Activated CD4-positive, alpha-beta T cell treated with anti-CD3 and anti-CD28 coated beads, Interleukin-2, amount 10 ng/mL, durations not matched to agents 24 days and 14 days (primary cell): ENCODE measurements at regions of chr9 and their contacts with region 1.

Region 1: DNA sequence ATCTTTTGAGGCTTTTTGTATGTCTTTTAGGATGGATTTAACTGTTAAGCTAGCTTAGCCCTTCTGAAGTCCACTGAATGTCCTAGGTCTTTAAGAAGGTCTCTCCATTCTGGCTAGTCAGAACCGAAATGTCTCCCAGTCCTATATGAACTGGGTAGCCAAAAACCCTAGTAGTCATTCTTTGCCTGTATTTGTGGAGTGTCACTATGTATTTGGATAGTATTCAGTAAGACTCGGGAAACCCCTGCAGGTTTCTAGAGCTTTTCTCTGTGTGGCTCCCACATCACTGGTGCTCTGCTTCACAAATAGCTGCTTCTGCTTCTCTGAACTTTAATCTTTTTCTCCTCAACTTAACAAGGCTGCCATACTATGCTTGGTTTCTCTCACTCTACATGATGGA is 68.0 kb downstream of the RIC1 start:
- DNase-seq: no peak
- H3K4me3 Mint-ChIP-seq: no peak overlapping the region
- H3K27ac Mint-ChIP-seq: peak overlapping the region; percentile 5
- H3K4me1 Mint-ChIP-seq: peaks cover 9% of the 10 kb centered on the region
- H3K27me3 Mint-ChIP-seq: no peaks in the 10 kb centered on the region

Region 2: DNA sequence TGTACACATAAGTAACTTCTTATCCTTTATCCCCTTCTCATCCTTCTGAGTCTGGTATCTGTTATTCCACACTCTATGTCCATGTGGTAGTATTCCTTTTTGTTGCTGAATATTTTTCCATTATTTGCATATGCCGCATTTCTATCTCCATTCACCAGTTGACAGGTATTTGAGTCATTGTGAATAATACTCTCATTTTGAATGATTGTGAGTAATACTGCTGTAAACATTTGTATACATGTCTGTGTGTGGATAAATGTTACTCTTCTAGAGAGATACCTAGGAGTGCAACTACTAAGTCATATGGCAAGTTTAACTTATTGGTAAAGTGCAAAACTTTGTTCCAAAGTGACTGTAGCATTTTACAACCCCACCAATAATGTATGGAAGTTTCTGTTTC is 52.4 kb before region 1 on chr9:
- intact Hi-C with region 1: loop called (anchors 10 kb)
- DNase-seq: no peak
- H3K4me3 Mint-ChIP-seq: no peak overlapping the region
- H3K27ac Mint-ChIP-seq: peak overlapping the region; percentile 52
- H3K4me1 Mint-ChIP-seq: peaks cover 16% of the 10 kb centered on the region
- H3K27me3 Mint-ChIP-seq: no peaks in the 10 kb centered on the region

Region 3: GRCh38 chr9:5748438-5748837 is 51.6 kb after region 1 on chr9:
- intact Hi-C with region 1: no loop called
- DNase-seq: no peak
- H3K4me3 Mint-ChIP-seq: no peak overlapping the region
- H3K27ac Mint-ChIP-seq: no peak overlapping the region
- H3K4me1 Mint-ChIP-seq: peaks cover 7% of the 10 kb centered on the region
- H3K27me3 Mint-ChIP-seq: no peaks in the 10 kb centered on the region

Region 4: DNA sequence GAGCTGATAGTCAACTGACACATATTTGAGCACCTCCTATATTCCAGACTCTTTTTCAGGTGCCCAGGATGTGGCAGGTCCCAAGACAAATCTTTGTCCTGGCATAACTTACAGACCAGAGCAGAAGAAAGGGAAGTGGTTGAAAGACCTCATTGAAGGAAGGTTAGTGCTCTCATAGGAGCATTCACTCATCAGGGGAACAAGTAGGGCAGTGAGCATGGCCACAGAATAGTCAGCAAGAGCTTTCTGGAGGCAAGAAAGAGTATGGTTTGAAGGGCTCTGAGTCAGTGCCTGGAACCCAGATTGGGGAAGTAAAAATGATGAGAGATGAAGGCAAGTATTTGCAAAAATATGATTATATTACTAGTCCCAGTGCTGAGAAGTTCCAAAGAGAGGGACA is 161.0 kb after region 1 on chr9:
- intact Hi-C with region 1: no loop called
- DNase-seq: no peak
- H3K4me3 Mint-ChIP-seq: no peak overlapping the region
- H3K27ac Mint-ChIP-seq: no peak overlapping the region
- H3K4me1 Mint-ChIP-seq: peaks cover 22% of the 10 kb centered on the region
- H3K27me3 Mint-ChIP-seq: no peaks in the 10 kb centered on the region